ENCODE measurements at regions of chr5 and their contacts with region 1.

Region 1: GRCh38 chr5:135072387-135073281 is 38.6 kb upstream of the PITX1 start:
- DNase-seq: no peak
- H3K4me3 ChIP-seq: no peak overlapping the region
- H3K27ac ChIP-seq: no peak overlapping the region
- H3K4me1 ChIP-seq: no peaks in the 10 kb centered on the region
- H3K27me3 ChIP-seq: no peaks in the 10 kb centered on the region
- CTCF ChIP-seq: no peak

Region 2: GRCh38 chr5:134873987-134874830 is 198.4 kb before region 1 on chr5 and contains the start of gene TXNDC15:
- intact Hi-C with region 1: no loop called
- DNase-seq: peak; percentile 89 to 95 (median 94)
- H3K4me3 ChIP-seq: peak within 1 kb of the TSS; percentile 68 to 96 (median 92)
- H3K27ac ChIP-seq: peak within 1 kb of the TSS; percentile 92
- H3K4me1 ChIP-seq: peaks cover 0 to 4% (median 0%) of the 10 kb centered on the region in 3 donors
- H3K27me3 ChIP-seq: no peaks in the 10 kb centered on the region
- CTCF ChIP-seq: no peak
- total RNA-seq, gene TXNDC15: 78.0 TPM

Region 3: GRCh38 chr5:134975078-134975715 is 97.4 kb before region 1 on chr5:
- intact Hi-C with region 1: no loop called
- DNase-seq: no peak
- H3K4me3 ChIP-seq: no peak overlapping the region
- H3K27ac ChIP-seq: no peak overlapping the region
- H3K4me1 ChIP-seq: no peaks in the 10 kb centered on the region
- H3K27me3 ChIP-seq: no peaks in the 10 kb centered on the region
- CTCF ChIP-seq: no peak

Region 4: GRCh38 chr5:135162661-135163265 is 90.1 kb after region 1 on chr5:
- intact Hi-C with region 1: loop called (anchors 5 kb)
- DNase-seq: no peak
- H3K4me3 ChIP-seq: no peak overlapping the region
- H3K27ac ChIP-seq: no peak overlapping the region
- H3K4me1 ChIP-seq: no peaks in the 10 kb centered on the region
- H3K27me3 ChIP-seq: no peaks in the 10 kb centered on the region
- CTCF ChIP-seq: no peak

Region 5: DNA sequence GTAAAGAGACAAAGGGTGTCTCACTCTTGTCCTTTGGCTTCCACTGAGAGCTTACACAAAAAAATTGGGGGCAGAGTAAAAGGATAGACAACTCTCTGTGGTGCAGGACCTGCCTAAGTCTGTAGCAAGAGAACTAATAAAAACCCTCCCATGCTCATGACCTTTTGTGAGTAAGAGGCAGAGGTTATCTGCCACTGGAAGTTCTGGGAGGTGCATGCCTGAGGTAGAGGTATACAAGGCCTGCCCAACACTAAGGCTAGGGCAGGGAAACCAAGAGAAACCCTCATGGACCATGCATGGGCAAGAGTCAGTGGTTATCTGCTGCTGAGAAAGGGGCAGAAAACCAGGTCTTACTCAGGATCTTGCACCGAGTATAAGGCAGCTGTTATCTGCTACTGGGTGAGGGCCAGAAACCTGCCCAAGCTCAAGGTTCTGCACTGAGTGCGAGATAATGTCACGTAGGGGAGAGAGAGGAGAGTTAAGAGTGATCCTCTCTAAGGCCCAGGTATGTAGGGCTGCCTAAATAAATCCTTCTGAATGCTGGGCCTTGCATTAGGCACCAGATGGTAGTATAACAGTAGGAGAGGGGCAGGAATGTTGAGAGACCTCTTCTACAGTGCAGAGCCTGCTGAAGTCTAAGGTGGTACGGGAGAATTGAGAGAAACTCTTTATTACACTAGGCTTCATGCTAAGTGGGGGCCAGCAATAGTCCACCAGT is 183.0 kb after region 1 on chr5:
- intact Hi-C with region 1: no loop called
- DNase-seq: no peak
- H3K4me3 ChIP-seq: no peak overlapping the region
- H3K27ac ChIP-seq: no peak overlapping the region
- H3K4me1 ChIP-seq: no peaks in the 10 kb centered on the region
- H3K27me3 ChIP-seq: no peaks in the 10 kb centered on the region
- CTCF ChIP-seq: no peak

Region 6: GRCh38 chr5:135426102-135427082 is 353.8 kb after region 1 on chr5:
- intact Hi-C with region 1: no loop called
- DNase-seq: peak in 1 of 5 donors; percentile 41
- H3K4me3 ChIP-seq: no peak overlapping the region
- H3K27ac ChIP-seq: no peak overlapping the region
- H3K4me1 ChIP-seq: no peaks in the 10 kb centered on the region
- H3K27me3 ChIP-seq: no peaks in the 10 kb centered on the region
- CTCF ChIP-seq: peak; percentile 63